Adrenal gland (tissue), 19 donors: ENCODE measurements at regions of chr15 and their contacts with region 1.

Region 1: GRCh38 chr15:42548253-42549031 is at the starts of genes HAUS2 and LRRC57:
- DNase-seq: peak; percentile 79 to 92 (median 89)
- H3K4me3 ChIP-seq: peak within 1 kb of the TSS; percentile 83 to 100 (median 88)
- H3K27ac ChIP-seq: peak within 1 kb of the TSS; percentile 67 to 94 (median 85)
- H3K4me1 ChIP-seq: peaks cover 6 to 44% of the 10 kb centered on the region in 2 donors
- H3K27me3 ChIP-seq: no peaks in the 10 kb centered on the region
- CTCF ChIP-seq: peak in 1 of 6 experiments; percentile 6
- POLR2A ChIP-seq: peak; percentile 67 to 79
- total RNA-seq, gene HAUS2: 13.0 to 57.9 (median 19.0) TPM
- total RNA-seq, gene LRRC57: 7.1 to 26.2 (median 17.9) TPM

Region 2: GRCh38 chr15:42495361-42496212 is 52.9 kb before region 1 on chr15 and contains the start of gene SNAP23:
- intact Hi-C with region 1: loop called in 1 of 2 experiments (anchors 10 kb)
- DNase-seq: peak; percentile 93 to 97 (median 96)
- H3K4me3 ChIP-seq: peak within 1 kb of the TSS; percentile 37 to 90 (median 64)
- H3K27ac ChIP-seq: peak within 1 kb of the TSS; percentile 82 to 94 (median 90)
- H3K4me1 ChIP-seq: peaks cover 33 to 52% of the 10 kb centered on the region in 2 donors
- H3K27me3 ChIP-seq: no peaks in the 10 kb centered on the region
- CTCF ChIP-seq: no peak
- POLR2A ChIP-seq: peak; percentile 52 to 97
- total RNA-seq, gene SNAP23: 44.7 to 88.2 (median 61.2) TPM

Region 3: DNA sequence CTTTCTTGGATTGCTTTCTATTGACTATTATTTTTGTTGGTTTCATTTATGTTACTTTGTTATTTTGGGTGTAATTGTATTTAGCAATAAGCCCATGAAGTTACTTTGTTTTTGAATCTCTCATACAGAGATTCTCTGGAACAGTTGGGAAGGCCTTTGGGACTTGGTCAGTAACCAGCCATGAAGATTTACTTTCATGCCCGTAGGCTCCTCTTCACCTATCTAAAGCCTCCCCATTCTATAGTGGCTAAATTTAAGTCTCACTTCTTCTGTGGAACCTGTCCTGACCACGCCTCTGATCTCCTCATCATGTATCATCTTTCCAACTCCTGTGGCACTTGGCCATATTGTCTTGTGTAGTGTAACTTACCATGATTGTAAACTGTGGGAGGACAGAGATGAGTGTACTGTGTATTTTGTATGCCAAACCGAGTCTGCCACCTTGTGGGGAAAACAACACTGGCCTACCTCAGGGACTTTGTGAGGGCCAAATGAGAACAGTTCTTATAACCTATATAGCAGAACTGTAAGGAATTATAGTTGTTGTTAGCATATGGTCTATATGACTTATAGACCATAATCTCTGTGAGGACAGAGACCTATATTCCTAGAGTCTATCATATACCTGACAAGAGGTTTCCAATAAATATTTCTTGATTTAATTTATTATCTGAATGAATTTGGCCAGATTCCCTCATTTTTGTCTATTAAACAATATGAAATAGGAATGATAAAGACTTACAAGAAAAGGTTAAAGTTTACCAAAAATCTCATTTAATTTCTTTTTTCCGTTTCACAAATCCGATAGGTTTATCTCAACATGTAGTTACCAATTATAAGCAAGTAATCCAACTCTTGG is 102.0 kb after region 1 on chr15:
- intact Hi-C with region 1: loop called in 1 of 2 experiments (anchors 10 kb)
- DNase-seq: peak; percentile 65 to 88 (median 74)
- H3K4me3 ChIP-seq: no peak overlapping the region
- H3K27ac ChIP-seq: no peak overlapping the region
- H3K4me1 ChIP-seq: no peaks in the 10 kb centered on the region
- H3K27me3 ChIP-seq: no peaks in the 10 kb centered on the region
- CTCF ChIP-seq: peak; percentile 57 to 82 (median 74)
- POLR2A ChIP-seq: no peak